Naive thymus-derived CD8-positive, alpha-beta T cell (primary cell): ENCODE measurements at regions of chr2 and their contacts with region 1.

Region 1: GRCh38 chr2:152717228-152718075 is at the start of gene PRPF40A:
- DNase-seq: peak; percentile 97 to 99 (median 98)
- ATAC-seq: peak; percentile 76 to 77
- H3K4me3 Mint-ChIP-seq: peak within 1 kb of the TSS; percentile 98 to 100 (median 99)
- H3K27ac Mint-ChIP-seq: peak within 1 kb of the TSS; percentile 98 to 100 (median 99)
- H3K4me1 Mint-ChIP-seq: peaks cover 28 to 80% (median 60%) of the 10 kb centered on the region in 4 donors
- H3K27me3 Mint-ChIP-seq: peaks cover 0 to 1% (median 0%) of the 10 kb centered on the region in 5 donors
- polyA plus RNA-seq, gene PRPF40A: 104 to 118 (median 105) TPM

Region 2: GRCh38 chr2:152175458-152176325 is 541.8 kb before region 1 on chr2 and contains the start of gene STAM2:
- POLR2A ChIA-PET with region 1: interaction called, 19 read pairs
- DNase-seq: peak; percentile 81 to 96 (median 93)
- ATAC-seq: peak; percentile 86 to 87
- H3K4me3 Mint-ChIP-seq: peak within 1 kb of the TSS; percentile 92 to 99 (median 97)
- H3K27ac Mint-ChIP-seq: peak within 1 kb of the TSS; percentile 98 to 99 (median 99)
- H3K4me1 Mint-ChIP-seq: peaks cover 19 to 42% (median 35%) of the 10 kb centered on the region in 4 donors
- H3K27me3 Mint-ChIP-seq: peaks cover 0 to 14% (median 3%) of the 10 kb centered on the region in 5 donors
- polyA plus RNA-seq, gene STAM2: 2.1 to 5.2 (median 3.9) TPM

Region 3: GRCh38 chr2:152537081-152537651 is 180.3 kb before region 1 on chr2:
- POLR2A ChIA-PET with region 1: no interaction called
- DNase-seq: no peak
- ATAC-seq: no peak
- H3K4me3 Mint-ChIP-seq: no peak overlapping the region
- H3K27ac Mint-ChIP-seq: no peak overlapping the region
- H3K4me1 Mint-ChIP-seq: no peaks in the 10 kb centered on the region
- H3K27me3 Mint-ChIP-seq: peaks cover 9 to 35% (median 15%) of the 10 kb centered on the region in 5 donors

Region 4: GRCh38 chr2:152620208-152620607 is 97.2 kb before region 1 on chr2:
- POLR2A ChIA-PET with region 1: no interaction called
- DNase-seq: no peak
- ATAC-seq: no peak
- H3K4me3 Mint-ChIP-seq: no peak overlapping the region
- H3K27ac Mint-ChIP-seq: no peak overlapping the region
- H3K4me1 Mint-ChIP-seq: no peaks in the 10 kb centered on the region
- H3K27me3 Mint-ChIP-seq: peaks cover 0 to 3% (median 0%) of the 10 kb centered on the region in 5 donors

Region 5: GRCh38 chr2:152694161-152694661 is 23.2 kb before region 1 on chr2:
- POLR2A ChIA-PET with region 1: interaction called, 11 read pairs
- DNase-seq: peak in 2 of 10 donors; percentile 24 to 29
- ATAC-seq: peak; percentile 66 to 68
- H3K4me3 Mint-ChIP-seq: peak overlapping the region; percentile 58 to 87 (median 75)
- H3K27ac Mint-ChIP-seq: peak overlapping the region; percentile 82 to 93 (median 91)
- H3K4me1 Mint-ChIP-seq: peaks cover 8 to 52% (median 31%) of the 10 kb centered on the region in 4 donors
- H3K27me3 Mint-ChIP-seq: no peaks in the 10 kb centered on the region

Region 6: GRCh38 chr2:152730591-152731303 is 13.3 kb after region 1 on chr2:
- POLR2A ChIA-PET with region 1: interaction called, 13 read pairs
- DNase-seq: peak in 8 of 10 donors; percentile 25 to 78 (median 54)
- ATAC-seq: peak; percentile 98 to 99
- H3K4me3 Mint-ChIP-seq: peak overlapping the region in 6 of 10 donors; percentile 0 to 60 (median 3)
- H3K27ac Mint-ChIP-seq: no peak overlapping the region
- H3K4me1 Mint-ChIP-seq: peaks cover 9 to 32% (median 22%) of the 10 kb centered on the region in 4 donors
- H3K27me3 Mint-ChIP-seq: no peaks in the 10 kb centered on the region